Activated T-helper 1 cell treated with anti-CD3 and anti-CD28 coated beads, Interleukin-12 subunit alpha, Interleukin-12 subunit beta, Interleukin-2, Interleukin-4 antibody, amounts not matched to agents 30 ng/mL and 10 ng/mL and 1 ng/mL, durations not matched to agents 14 hours and 24 hours and 36 hours (primary cell): ENCODE measurements at regions of chr4 and their contacts with region 1.

Region 1: GRCh38 chr4:104966349-104967033 is 180.2 kb upstream of the TET2 start:
- DNase-seq: peak; percentile 42
- H3K4me3 Mint-ChIP-seq: peak overlapping the region; percentile 63
- H3K27ac Mint-ChIP-seq: peak overlapping the region; percentile 91
- H3K4me1 Mint-ChIP-seq: peaks cover 17% of the 10 kb centered on the region
- H3K27me3 Mint-ChIP-seq: peaks cover 5% of the 10 kb centered on the region

Region 2: DNA sequence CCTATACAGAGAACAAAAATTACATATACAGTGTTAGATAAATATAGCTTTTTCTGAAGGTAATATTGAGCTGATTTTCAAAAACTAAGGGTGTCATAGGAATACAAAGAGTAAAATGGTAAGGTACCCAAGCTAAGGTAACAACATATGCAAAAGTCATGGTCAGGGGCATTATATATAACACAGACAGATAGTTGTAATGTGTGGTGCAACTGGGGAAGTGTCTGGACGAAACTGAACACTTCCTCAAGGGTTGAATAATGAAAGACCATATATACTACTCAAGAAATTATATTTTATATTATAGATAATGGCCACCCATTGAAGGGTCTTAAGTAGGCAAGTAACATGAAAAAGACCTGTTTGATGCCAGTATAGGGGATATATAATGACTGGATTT is 209.7 kb before region 1 on chr4:
- intact Hi-C with region 1: no loop called
- DNase-seq: no peak
- H3K4me3 Mint-ChIP-seq: no peak overlapping the region
- H3K27ac Mint-ChIP-seq: no peak overlapping the region
- H3K4me1 Mint-ChIP-seq: no peaks in the 10 kb centered on the region
- H3K27me3 Mint-ChIP-seq: no peaks in the 10 kb centered on the region

Region 3: GRCh38 chr4:104930298-104930697 is 36.2 kb before region 1 on chr4:
- intact Hi-C with region 1: loop called (anchors 2 kb)
- DNase-seq: no peak
- H3K4me3 Mint-ChIP-seq: no peak overlapping the region
- H3K27ac Mint-ChIP-seq: no peak overlapping the region
- H3K4me1 Mint-ChIP-seq: peaks cover 46% of the 10 kb centered on the region
- H3K27me3 Mint-ChIP-seq: peaks cover 4% of the 10 kb centered on the region

Region 4: GRCh38 chr4:105146276-105147015 is 180.0 kb after region 1 on chr4 and contains the start of gene TET2:
- intact Hi-C with region 1: loop called (anchors 1 kb)
- DNase-seq: peak; percentile 77
- H3K4me3 Mint-ChIP-seq: peak within 1 kb of the TSS; percentile 95
- H3K27ac Mint-ChIP-seq: peak within 1 kb of the TSS; percentile 98
- H3K4me1 Mint-ChIP-seq: peaks cover 50% of the 10 kb centered on the region
- H3K27me3 Mint-ChIP-seq: no peaks in the 10 kb centered on the region
- total RNA-seq, gene TET2: 28.7 and 28.8 TPM in 2 replicates

Region 5: DNA sequence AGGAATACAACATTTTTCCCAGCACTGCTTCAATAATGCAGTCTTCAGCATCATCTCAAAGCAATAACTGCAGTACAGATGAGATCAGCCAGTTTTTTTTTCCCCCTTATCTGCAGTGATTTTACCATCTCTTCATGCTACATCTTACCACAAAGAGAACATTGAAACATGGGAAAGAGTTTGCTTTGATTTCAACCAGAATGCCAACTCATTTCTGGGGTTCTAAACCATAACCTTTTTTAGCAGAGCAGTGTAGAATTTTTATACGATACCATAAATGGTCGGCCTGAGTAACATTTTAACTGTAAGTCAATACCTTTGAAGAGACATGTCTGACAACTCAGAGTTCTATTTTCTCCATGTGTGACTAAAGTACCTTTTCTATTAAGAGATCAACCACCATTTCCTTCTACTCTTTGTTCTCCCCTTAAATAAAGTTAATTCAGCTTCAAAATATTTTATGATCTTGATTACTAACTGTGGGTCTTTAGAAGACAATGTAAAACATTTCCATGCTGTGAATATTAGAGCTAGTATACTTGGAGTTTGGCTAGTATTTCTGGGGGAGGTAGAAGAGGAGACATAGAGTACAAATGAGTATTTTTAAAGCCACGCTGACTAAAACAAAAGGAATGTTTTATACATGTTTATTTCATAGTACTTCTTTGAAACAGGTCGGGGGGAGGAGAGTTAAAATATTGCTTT is 249.3 kb after region 1 on chr4:
- intact Hi-C with region 1: loop called (anchors 2 kb)
- DNase-seq: no peak
- H3K4me3 Mint-ChIP-seq: peak overlapping the region; percentile 23
- H3K27ac Mint-ChIP-seq: peak overlapping the region; percentile 46
- H3K4me1 Mint-ChIP-seq: peaks cover 20% of the 10 kb centered on the region
- H3K27me3 Mint-ChIP-seq: no peaks in the 10 kb centered on the region

Region 6: DNA sequence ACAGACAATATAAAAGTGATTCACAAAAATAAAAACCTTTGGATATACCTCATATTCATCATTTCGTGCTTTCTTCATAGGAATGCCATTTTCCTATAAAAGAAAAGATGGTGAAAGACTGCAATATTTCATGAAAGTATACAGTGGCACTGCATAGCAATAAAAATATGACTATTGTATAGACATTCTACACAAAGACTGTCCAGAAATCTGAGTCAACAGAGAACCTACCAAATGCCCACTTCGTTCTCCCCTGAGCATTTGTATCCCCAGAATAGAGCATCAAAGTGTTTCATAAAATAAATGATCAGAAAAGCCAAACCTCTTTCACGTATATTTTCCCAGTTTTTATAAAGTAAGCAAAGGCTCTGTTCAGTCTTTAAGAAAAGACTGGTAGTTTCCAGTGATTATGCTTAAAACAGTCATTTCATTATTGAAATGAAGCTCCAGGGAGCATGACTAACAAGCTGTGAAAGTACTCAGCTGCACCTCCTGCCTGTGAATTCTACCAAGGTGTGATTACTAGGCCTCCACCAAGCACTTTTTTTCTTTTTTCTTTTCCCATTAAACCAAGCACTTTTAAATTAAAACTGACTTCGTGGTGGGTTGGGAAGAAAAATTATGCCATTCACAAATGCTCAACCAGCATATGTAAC is 487.2 kb after region 1 on chr4:
- intact Hi-C with region 1: loop called (anchors 5 kb)
- DNase-seq: no peak
- H3K4me3 Mint-ChIP-seq: no peak overlapping the region
- H3K27ac Mint-ChIP-seq: peak overlapping the region; percentile 45
- H3K4me1 Mint-ChIP-seq: peaks cover 33% of the 10 kb centered on the region
- H3K27me3 Mint-ChIP-seq: no peaks in the 10 kb centered on the region